Activated T-helper 1 cell treated with anti-CD3 and anti-CD28 coated beads, Interleukin-12 subunit alpha, Interleukin-12 subunit beta, Interleukin-2, Interleukin-4 antibody, amounts not matched to agents 30 ng/mL and 10 ng/mL and 1 ng/mL, durations not matched to agents 14 hours and 24 hours and 36 hours (primary cell): ENCODE measurements at regions of chr11 and their contacts with region 1.

Region 1: GRCh38 chr11:15101072-15101709 is 13.5 kb upstream of the INSC start:
- DNase-seq: peak; percentile 41
- H3K4me3 Mint-ChIP-seq: no peak overlapping the region
- H3K27ac Mint-ChIP-seq: no peak overlapping the region
- H3K4me1 Mint-ChIP-seq: peaks cover 9% of the 10 kb centered on the region
- H3K27me3 Mint-ChIP-seq: peaks cover 19% of the 10 kb centered on the region

Region 2: GRCh38 chr11:15159085-15159484 is 57.9 kb after region 1 on chr11:
- intact Hi-C with region 1: loop called (anchors 1 kb)
- DNase-seq: no peak
- H3K4me3 Mint-ChIP-seq: no peak overlapping the region
- H3K27ac Mint-ChIP-seq: no peak overlapping the region
- H3K4me1 Mint-ChIP-seq: no peaks in the 10 kb centered on the region
- H3K27me3 Mint-ChIP-seq: peaks cover 11% of the 10 kb centered on the region

Region 3: GRCh38 chr11:15208378-15209222 is 107.4 kb after region 1 on chr11:
- intact Hi-C with region 1: loop called (anchors 1 kb)
- DNase-seq: peak; percentile 65
- H3K4me3 Mint-ChIP-seq: no peak overlapping the region
- H3K27ac Mint-ChIP-seq: no peak overlapping the region
- H3K4me1 Mint-ChIP-seq: no peaks in the 10 kb centered on the region
- H3K27me3 Mint-ChIP-seq: peaks cover 8% of the 10 kb centered on the region